ENCODE measurements at regions of chr5 and their contacts with region 1.

Region 1: GRCh38 chr5:94524841-94525697 is 93.3 kb downstream of the KIAA0825 start:
- DNase-seq: peak in 7 of 9 donors; percentile 2 to 43 (median 27)
- ATAC-seq: peak; percentile 66
- H3K4me3 ChIP-seq: no peak overlapping the region
- H3K4me3 Mint-ChIP-seq: no peak overlapping the region
- H3K27ac ChIP-seq: no peak overlapping the region
- H3K27ac Mint-ChIP-seq: no peak overlapping the region
- H3K4me1 ChIP-seq: no peaks in the 10 kb centered on the region
- H3K4me1 Mint-ChIP-seq: peaks cover 0 to 3% (median 0%) of the 10 kb centered on the region in 7 donors
- H3K27me3 ChIP-seq: no peaks in the 10 kb centered on the region
- H3K27me3 Mint-ChIP-seq: peaks cover 0 to 5% (median 0%) of the 10 kb centered on the region in 5 donors

Region 2: GRCh38 chr5:94508461-94509148 is 16.5 kb before region 1 on chr5:
- CTCF ChIA-PET with region 1: no interaction called
- POLR2A ChIA-PET with region 1: no interaction called
- intact Hi-C with region 1: no loop called
- DNase-seq: no peak
- ATAC-seq: no peak
- H3K4me3 ChIP-seq: no peak overlapping the region
- H3K4me3 Mint-ChIP-seq: no peak overlapping the region
- H3K27ac ChIP-seq: no peak overlapping the region
- H3K27ac Mint-ChIP-seq: no peak overlapping the region
- H3K4me1 ChIP-seq: no peaks in the 10 kb centered on the region
- H3K4me1 Mint-ChIP-seq: no peaks in the 10 kb centered on the region
- H3K27me3 ChIP-seq: no peaks in the 10 kb centered on the region
- H3K27me3 Mint-ChIP-seq: no peaks in the 10 kb centered on the region

Region 3: GRCh38 chr5:94693043-94693822 is 168.2 kb after region 1 on chr5:
- CTCF ChIA-PET with region 1: no interaction called
- POLR2A ChIA-PET with region 1: no interaction called
- intact Hi-C with region 1: loop called (anchors 1 kb)
- DNase-seq: peak in 2 of 9 donors; percentile 1 to 16
- ATAC-seq: peak; percentile 61
- H3K4me3 ChIP-seq: no peak overlapping the region
- H3K4me3 Mint-ChIP-seq: no peak overlapping the region
- H3K27ac ChIP-seq: no peak overlapping the region
- H3K27ac Mint-ChIP-seq: no peak overlapping the region
- H3K4me1 ChIP-seq: no peaks in the 10 kb centered on the region
- H3K4me1 Mint-ChIP-seq: peaks cover 0 to 3% (median 0%) of the 10 kb centered on the region in 7 donors
- H3K27me3 ChIP-seq: no peaks in the 10 kb centered on the region
- H3K27me3 Mint-ChIP-seq: no peaks in the 10 kb centered on the region

Region 4: DNA sequence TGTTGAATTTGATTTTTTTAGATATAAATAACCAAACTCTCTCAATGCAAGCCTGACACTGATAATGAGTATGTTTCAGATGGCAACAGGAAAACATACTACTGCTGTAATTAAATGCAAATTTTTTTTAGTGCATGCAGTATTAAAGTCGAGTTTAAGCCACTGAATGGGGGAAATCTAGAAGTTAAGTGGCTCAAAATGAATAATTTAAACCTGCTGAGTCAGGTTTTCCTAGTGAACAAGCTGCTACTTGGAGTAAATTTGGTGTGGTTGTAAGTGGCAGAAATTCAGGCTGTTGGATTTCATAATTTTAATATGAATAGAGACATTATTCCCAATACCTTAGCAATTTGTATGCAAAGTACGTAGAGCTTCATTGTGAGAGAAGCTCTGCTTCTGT is 215.2 kb after region 1 on chr5:
- CTCF ChIA-PET with region 1: interaction called, 13 read pairs
- POLR2A ChIA-PET with region 1: no interaction called
- intact Hi-C with region 1: loop called (anchors 1 kb)
- DNase-seq: no peak
- ATAC-seq: no peak
- H3K4me3 ChIP-seq: no peak overlapping the region
- H3K4me3 Mint-ChIP-seq: no peak overlapping the region
- H3K27ac ChIP-seq: no peak overlapping the region
- H3K27ac Mint-ChIP-seq: no peak overlapping the region
- H3K4me1 ChIP-seq: no peaks in the 10 kb centered on the region
- H3K4me1 Mint-ChIP-seq: peaks cover 0 to 2% (median 0%) of the 10 kb centered on the region in 7 donors
- H3K27me3 ChIP-seq: no peaks in the 10 kb centered on the region
- H3K27me3 Mint-ChIP-seq: peaks cover 0 to 9% (median 3%) of the 10 kb centered on the region in 5 donors

Region 5: DNA sequence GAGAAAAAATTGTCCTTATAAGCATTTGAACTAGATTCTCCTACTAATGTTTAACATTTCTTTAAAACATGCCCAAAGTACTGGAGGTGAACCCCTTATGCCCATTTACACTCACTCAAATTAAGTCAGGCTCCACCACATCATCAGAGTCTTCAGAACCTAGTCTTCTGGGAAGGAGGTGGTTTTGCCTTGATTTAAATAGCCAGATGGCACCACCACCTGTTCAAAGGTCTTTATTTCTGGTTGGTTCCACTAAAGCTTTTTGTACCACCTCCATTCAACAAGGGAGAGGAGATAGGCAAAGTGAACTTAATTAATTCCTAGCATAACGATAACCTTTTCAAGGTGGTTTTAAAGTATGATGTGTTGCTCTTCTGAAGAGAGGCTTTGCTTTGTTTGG is 282.9 kb after region 1 on chr5:
- CTCF ChIA-PET with region 1: no interaction called
- POLR2A ChIA-PET with region 1: no interaction called
- intact Hi-C with region 1: loop called in 1 of 2 experiments (anchors 1 kb)
- DNase-seq: no peak
- ATAC-seq: no peak
- H3K4me3 ChIP-seq: no peak overlapping the region
- H3K4me3 Mint-ChIP-seq: no peak overlapping the region
- H3K27ac ChIP-seq: no peak overlapping the region
- H3K27ac Mint-ChIP-seq: no peak overlapping the region
- H3K4me1 ChIP-seq: no peaks in the 10 kb centered on the region
- H3K4me1 Mint-ChIP-seq: no peaks in the 10 kb centered on the region
- H3K27me3 ChIP-seq: no peaks in the 10 kb centered on the region
- H3K27me3 Mint-ChIP-seq: peaks cover 0 to 51% (median 4%) of the 10 kb centered on the region in 5 donors

Region 6: GRCh38 chr5:94916619-94917018 is 391.6 kb after region 1 on chr5:
- CTCF ChIA-PET with region 1: no interaction called
- POLR2A ChIA-PET with region 1: no interaction called
- intact Hi-C with region 1: loop called in 1 of 2 experiments (anchors 10 kb)
- DNase-seq: no peak
- ATAC-seq: no peak
- H3K4me3 ChIP-seq: no peak overlapping the region
- H3K4me3 Mint-ChIP-seq: no peak overlapping the region
- H3K27ac ChIP-seq: no peak overlapping the region
- H3K27ac Mint-ChIP-seq: no peak overlapping the region
- H3K4me1 ChIP-seq: no peaks in the 10 kb centered on the region
- H3K4me1 Mint-ChIP-seq: no peaks in the 10 kb centered on the region
- H3K27me3 ChIP-seq: no peaks in the 10 kb centered on the region
- H3K27me3 Mint-ChIP-seq: peaks cover 0 to 22% (median 8%) of the 10 kb centered on the region in 5 donors

Measured in naive thymus-derived CD4-positive, alpha-beta T cell (primary cell).